ENCODE measurements at regions of chr22 and their contacts with region 1.

Region 1: GRCh38 chr22:24244101-24244787 is 638 bp downstream of the GGT5 start:
- DNase-seq: no peak

Region 2: DNA sequence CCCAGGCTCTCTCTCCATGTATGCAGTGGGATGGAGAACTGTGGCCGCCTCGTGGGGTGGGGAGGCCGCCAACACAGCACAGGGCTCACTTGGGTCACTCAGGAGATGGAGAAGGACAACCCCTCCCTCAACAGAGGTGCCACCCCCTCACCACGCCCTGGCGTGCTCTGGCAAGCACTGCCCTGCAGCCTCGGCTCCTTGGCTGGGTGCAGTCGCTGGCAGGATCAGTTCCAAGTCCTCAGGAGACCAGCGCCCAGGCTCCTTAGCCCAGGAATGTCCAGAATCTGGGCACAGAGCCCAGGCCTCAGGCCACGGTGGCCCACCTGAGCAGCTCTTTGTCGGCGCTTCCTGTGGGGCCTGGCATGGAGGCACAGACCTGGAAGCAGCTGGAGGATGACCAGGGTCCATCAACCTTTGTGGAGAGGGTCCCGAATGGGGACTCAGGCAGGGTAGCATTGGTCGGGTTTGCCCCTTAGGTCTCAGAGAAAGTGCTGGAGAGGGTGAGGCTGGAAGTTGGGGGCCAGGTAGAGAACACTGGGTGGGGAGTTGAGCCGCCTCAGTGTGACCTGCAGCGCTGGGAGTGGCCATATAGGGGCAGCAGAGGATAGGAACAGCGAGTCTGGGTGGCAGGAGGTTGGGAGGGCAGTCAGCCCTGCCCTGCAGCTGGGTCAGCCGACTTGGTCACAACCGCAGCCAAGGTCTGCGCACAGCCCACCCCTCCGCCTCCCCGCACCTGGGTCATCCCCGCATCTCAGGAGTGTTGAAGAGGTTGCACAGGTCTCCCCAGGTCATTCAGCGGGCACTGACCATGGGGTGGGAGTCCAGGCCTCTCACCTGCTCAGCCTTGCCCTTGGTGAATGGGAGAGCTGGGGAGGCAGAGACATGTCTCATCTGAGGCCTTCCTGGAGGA is 54.7 kb before region 1 on chr22:
- intact Hi-C with region 1: loop called (anchors 2 kb)
- DNase-seq: peak; percentile 91

Region 3: DNA sequence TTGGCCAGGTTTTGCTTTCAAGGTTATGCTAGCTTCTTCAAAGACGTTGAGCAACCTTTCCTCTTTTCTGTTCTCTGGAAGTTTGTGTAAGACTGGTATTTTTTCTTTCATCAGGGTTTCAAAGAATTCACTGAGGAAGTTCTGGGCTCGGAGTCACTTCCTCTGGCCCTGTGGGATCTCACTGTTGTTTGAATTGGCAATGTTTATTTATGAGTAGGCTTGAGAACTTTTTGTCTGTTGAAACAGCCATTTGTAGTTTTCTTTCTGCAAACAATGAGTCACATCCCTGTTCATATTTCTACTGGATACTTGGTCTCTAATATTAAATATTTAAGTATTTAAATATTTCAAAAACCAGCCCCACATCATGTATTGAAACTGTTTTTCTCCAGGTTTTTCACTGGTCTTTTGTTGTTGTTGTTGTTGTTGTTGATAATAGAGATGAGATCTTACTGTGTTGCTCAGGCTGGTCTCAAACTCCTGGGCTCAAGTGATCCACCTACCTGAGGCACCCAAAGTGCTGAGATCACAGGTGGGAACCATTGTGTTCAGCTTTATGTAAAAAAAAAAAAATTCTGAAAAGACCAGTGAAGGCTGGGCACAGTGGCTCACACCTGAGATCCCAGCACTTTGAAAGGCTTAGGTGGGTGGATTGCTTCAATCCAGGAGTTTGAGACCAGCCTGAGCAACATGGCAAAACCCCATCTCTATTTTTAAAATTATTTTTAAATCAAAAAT is 36.1 kb before region 1 on chr22:
- intact Hi-C with region 1: loop called (anchors 5 kb)
- DNase-seq: no peak